HepG2 (cell line): ENCODE measurements at regions of chr3 and their contacts with region 1.

Region 1: GRCh38 chr3:196432137-196432879 is at the start of gene UBXN7:
- DNase-seq: peak; percentile 84
- ATAC-seq: peak; percentile 94
- H3K4me3 ChIP-seq: peak within 1 kb of the TSS; percentile 87 to 97 (median 90)
- H3K27ac ChIP-seq: peak within 1 kb of the TSS; percentile 75
- H3K4me1 ChIP-seq: peaks cover 23% of the 10 kb centered on the region
- H3K27me3 ChIP-seq: no peaks in the 10 kb centered on the region; a peak in 1 of 5 replicates
- CTCF ChIP-seq: no peak
- EP300 ChIP-seq: no peak
- POLR2A ChIP-seq: peak; percentile 63 to 81
- RAD21 ChIP-seq: no peak
- total RNA-seq, gene UBXN7: 12.5 and 21.5 TPM in 2 replicates

Region 2: DNA sequence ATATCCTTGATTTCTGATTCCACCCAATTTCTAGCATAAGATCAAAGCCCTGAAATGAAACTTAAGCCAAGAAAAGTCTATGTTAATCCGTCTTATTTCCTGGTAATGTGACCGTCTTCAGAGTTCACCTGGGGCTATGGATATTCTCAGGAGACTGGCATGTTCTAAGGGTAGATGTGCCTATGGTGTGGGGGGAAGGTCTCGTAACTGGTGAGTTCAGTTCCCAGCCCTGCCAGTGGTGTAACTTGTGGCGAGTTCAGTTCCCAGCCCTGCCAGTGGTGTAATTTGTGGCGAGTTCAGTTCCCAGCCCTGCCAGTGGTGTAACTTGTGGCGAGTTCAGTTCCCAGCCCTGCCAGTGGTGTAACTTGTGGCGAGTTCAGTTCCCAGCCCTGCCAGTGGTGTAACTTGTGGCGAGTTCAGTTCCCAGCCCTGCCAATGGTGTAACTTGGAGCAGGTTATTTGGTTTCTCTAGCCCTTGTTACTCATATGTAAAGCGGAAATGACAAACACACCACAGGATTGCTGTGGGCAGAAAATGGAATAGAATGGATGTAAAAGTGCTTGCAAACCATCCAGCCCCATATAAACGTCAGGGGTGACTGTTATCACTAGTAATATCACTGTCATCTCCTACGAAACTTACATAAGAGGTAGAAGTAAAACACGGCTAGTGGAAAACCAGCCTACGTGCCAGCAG is 185.5 kb before region 1 on chr3:
- CTCF ChIA-PET with region 1: no interaction called
- POLR2A ChIA-PET with region 1: no interaction called
- in situ Hi-C with region 1: loop called (anchors 10 kb)
- intact Hi-C with region 1: no loop called
- DNase-seq: no peak
- ATAC-seq: no peak
- H3K4me3 ChIP-seq: no peak overlapping the region
- H3K27ac ChIP-seq: no peak overlapping the region
- H3K4me1 ChIP-seq: no peaks in the 10 kb centered on the region
- H3K27me3 ChIP-seq: no peaks in the 10 kb centered on the region
- CTCF ChIP-seq: no peak
- EP300 ChIP-seq: no peak
- POLR2A ChIP-seq: no peak
- RAD21 ChIP-seq: no peak

Region 3: GRCh38 chr3:196317687-196318467 is 114.4 kb before region 1 on chr3 and contains the start of gene DYNLT2B:
- CTCF ChIA-PET with region 1: no interaction called
- POLR2A ChIA-PET with region 1: interaction called, 10 read pairs
- in situ Hi-C with region 1: no loop called
- intact Hi-C with region 1: no loop called
- DNase-seq: peak; percentile 76
- ATAC-seq: peak; percentile 92
- H3K4me3 ChIP-seq: peak within 1 kb of the TSS; percentile 70 to 94 (median 94)
- H3K27ac ChIP-seq: peak within 1 kb of the TSS; percentile 96
- H3K4me1 ChIP-seq: peaks cover 37% of the 10 kb centered on the region
- H3K27me3 ChIP-seq: no peaks in the 10 kb centered on the region
- CTCF ChIP-seq: peak; percentile 51
- EP300 ChIP-seq: no peak
- POLR2A ChIP-seq: peak; percentile 63 to 89
- RAD21 ChIP-seq: peak; percentile 60
- total RNA-seq, gene DYNLT2B: 7.0 and 11.2 TPM in 2 replicates

Region 4: DNA sequence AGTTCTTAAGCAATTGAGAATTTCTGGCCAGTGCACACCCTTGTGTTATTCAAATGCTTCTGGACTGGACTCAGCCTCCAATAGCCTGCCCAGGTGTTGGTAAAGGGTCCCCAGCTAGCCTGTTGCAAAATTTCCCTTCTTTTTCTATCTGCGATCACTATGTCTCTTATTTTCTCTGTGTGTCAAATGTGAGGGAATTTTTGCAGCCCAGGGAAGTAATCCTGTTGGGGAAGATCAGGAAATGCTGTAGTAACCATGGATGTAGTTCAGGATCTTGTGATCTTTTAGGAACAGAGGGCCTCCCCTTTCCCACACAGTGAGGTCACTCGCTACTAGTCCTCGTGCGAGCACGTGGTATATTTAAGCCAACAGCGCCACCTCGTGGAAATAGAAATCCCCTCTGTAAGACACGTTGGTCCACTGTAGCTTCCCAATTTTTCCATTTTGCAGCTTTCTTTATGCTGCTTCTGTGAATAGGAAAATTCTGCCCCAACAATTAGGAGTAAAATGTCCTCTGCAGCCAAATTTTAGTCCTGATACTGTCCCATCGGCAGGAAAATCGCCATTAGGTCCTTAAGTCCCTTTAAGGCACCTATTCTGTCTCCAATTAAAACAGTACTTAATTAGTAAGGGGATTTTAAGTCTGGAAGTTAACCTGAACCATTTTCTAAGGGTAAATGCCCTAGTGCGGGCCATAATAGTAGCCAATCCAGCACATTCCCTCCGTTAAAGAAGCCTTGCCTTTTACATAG is 86.8 kb after region 1 on chr3:
- CTCF ChIA-PET with region 1: no interaction called
- POLR2A ChIA-PET with region 1: no interaction called
- in situ Hi-C with region 1: no loop called
- intact Hi-C with region 1: no loop called
- DNase-seq: peak; percentile 82
- ATAC-seq: peak; percentile 96
- H3K4me3 ChIP-seq: peak overlapping the region in 1 of 3 experiments; percentile 38; a peak in 2 of 6 replicates
- H3K27ac ChIP-seq: no peak overlapping the region
- H3K4me1 ChIP-seq: peaks cover 19% of the 10 kb centered on the region
- H3K27me3 ChIP-seq: peaks cover 0 to 17% of the 10 kb centered on the region in 2 experiments; a peak in 2 of 5 replicates
- CTCF ChIP-seq: peak; percentile 92
- EP300 ChIP-seq: no peak
- POLR2A ChIP-seq: no peak
- RAD21 ChIP-seq: peak; percentile 88